Common myeloid progenitor, CD34-positive (primary cell): ENCODE measurements at regions of chr9 and their contacts with region 1.

Region 1: GRCh38 chr9:72271613-72272478 is 93.2 kb downstream of the ZFAND5 start:
- DNase-seq: peak; percentile 33 to 68 (median 58)
- H3K4me3 ChIP-seq: no peak overlapping the region
- H3K27ac ChIP-seq: no peak overlapping the region
- H3K4me1 ChIP-seq: peaks cover 0 to 6% (median 1%) of the 10 kb centered on the region in 4 experiments
- H3K27me3 ChIP-seq: peaks cover 0 to 5% (median 0%) of the 10 kb centered on the region in 5 experiments

Region 2: GRCh38 chr9:72827950-72828731 is 556.3 kb after region 1 on chr9:
- CTCF ChIA-PET with region 1: interaction called, 71 read pairs
- POLR2A ChIA-PET with region 1: no interaction called
- DNase-seq: no peak
- H3K4me3 ChIP-seq: no peak overlapping the region
- H3K27ac ChIP-seq: no peak overlapping the region
- H3K4me1 ChIP-seq: no peaks in the 10 kb centered on the region
- H3K27me3 ChIP-seq: no peaks in the 10 kb centered on the region